Heart left ventricle (tissue), 16 donors: ENCODE measurements at regions of chr5 and their contacts with region 1.

Region 1: DNA sequence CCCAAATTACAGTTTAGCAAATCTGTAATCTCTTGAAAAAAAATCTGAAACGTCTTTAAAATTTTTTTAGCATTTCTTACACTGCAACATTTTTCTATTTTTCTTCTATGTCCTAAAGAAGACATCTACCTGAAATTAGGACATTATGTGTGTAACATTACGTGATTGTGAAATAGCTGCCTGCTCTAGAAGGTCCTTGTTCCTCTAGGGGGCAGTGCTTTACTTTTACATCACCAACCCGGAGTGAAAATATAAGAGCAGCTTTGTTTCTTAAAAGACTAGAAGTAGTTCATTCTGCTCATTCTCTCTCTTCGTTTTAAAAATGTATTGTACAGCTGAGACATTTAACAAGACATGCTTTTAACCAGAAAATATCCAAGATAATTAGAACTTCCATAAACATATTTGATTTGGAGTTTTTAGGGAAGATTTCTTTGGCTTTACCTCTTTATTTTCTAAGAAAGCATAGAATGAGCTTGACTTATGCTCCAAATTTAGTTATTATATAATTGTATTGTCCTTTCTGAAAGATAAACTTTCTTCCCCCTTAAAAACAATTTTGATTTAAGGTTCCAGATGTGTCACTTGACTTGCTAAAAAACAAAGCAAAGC is 48.1 kb upstream of the RIOK2 start:
- DNase-seq: peak in 1 of 5 donors; percentile 40
- ATAC-seq: peak; percentile 73 to 84 (median 77)
- H3K4me3 ChIP-seq: no peak overlapping the region
- H3K27ac ChIP-seq: peak overlapping the region in 2 of 12 donors; percentile 25 to 33
- H3K4me1 ChIP-seq: peaks cover 0 to 20% (median 0%) of the 10 kb centered on the region in 12 donors
- H3K27me3 ChIP-seq: no peaks in the 10 kb centered on the region
- CTCF ChIP-seq: peak; percentile 62 to 86 (median 78)
- POLR2A ChIP-seq: no peak

Region 2: DNA sequence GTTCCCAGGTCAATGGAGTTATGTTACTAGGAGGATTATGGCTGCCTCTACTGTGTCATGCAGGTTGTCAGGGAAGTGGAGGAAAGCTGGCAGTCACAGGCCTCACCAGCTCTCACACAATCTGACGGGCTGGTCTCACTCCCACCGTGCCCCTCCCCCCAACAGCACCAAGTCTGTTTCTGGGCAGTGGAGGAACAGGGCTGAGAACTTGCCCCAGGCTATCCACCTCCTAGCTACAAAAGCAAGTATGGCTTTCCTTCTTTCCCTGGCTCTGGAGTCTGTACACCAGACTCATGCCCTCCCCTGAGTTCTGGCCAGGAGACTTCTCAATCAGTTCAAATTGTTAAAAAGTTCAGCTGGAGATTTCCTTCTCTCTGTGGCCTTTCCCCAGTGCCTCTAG is 22.4 kb before region 1 on chr5:
- intact Hi-C with region 1: no loop called
- DNase-seq: no peak
- ATAC-seq: no peak
- H3K4me3 ChIP-seq: no peak overlapping the region
- H3K27ac ChIP-seq: no peak overlapping the region
- H3K4me1 ChIP-seq: no peaks in the 10 kb centered on the region
- H3K27me3 ChIP-seq: no peaks in the 10 kb centered on the region
- CTCF ChIP-seq: no peak
- POLR2A ChIP-seq: no peak

Region 3: DNA sequence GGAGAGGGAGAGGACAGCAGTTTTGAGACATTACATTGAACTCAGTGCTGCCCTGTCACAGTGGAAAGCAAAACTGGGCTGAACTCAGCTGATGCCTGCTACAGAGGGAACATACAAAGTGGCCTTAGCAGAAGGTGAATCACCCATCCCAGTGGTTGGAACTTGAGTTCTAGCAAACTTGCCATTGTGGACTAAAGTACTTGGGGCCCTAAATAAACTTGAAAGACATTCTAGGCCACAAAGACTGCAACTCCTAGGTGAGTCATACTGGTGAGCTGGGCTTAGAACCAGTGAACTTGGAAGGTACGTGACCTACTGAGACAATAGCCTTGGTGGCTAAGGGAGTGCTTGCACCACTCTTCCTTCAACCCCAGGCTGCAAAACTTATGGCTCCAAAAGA is 107.6 kb after region 1 on chr5:
- intact Hi-C with region 1: no loop called
- DNase-seq: no peak
- ATAC-seq: no peak
- H3K4me3 ChIP-seq: no peak overlapping the region
- H3K27ac ChIP-seq: no peak overlapping the region
- H3K4me1 ChIP-seq: no peaks in the 10 kb centered on the region
- H3K27me3 ChIP-seq: no peaks in the 10 kb centered on the region
- CTCF ChIP-seq: no peak
- POLR2A ChIP-seq: no peak

Region 4: DNA sequence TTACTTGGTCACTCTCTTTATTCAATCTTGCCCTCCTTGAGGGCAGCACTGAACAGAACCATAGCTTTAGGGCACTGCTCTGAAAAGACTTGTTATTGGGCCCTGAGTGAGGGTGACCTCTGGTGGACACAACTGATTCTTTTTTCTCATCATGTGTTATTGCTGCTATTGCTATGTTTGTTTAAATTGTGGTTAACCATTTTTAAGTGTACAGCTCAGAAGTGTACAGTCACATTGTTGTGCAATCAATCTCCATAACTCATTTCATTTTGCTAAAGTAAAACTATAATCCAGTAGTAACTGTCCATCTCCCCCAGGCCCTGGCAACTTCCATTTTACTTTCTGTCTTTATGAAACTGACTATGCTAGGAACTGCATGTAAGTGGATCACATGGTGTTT is 303.0 kb after region 1 on chr5:
- intact Hi-C with region 1: loop called in 6 of 10 experiments (anchors 2 to 10 kb)
- DNase-seq: no peak
- ATAC-seq: peak; percentile 51 to 70 (median 63)
- H3K4me3 ChIP-seq: no peak overlapping the region
- H3K27ac ChIP-seq: no peak overlapping the region
- H3K4me1 ChIP-seq: peaks cover 0 to 7% (median 0%) of the 10 kb centered on the region in 12 donors
- H3K27me3 ChIP-seq: no peaks in the 10 kb centered on the region
- CTCF ChIP-seq: peak in 11 of 12 donors; percentile 25 to 67 (median 58)
- POLR2A ChIP-seq: no peak

Region 5: GRCh38 chr5:98827161-98827560 is 1596.0 kb after region 1 on chr5:
- intact Hi-C with region 1: loop called in 3 of 10 experiments (anchors 5 to 10 kb)
- DNase-seq: no peak
- ATAC-seq: peak in 1 of 4 donors; percentile 59
- H3K4me3 ChIP-seq: no peak overlapping the region
- H3K27ac ChIP-seq: no peak overlapping the region
- H3K4me1 ChIP-seq: no peaks in the 10 kb centered on the region
- H3K27me3 ChIP-seq: no peaks in the 10 kb centered on the region
- CTCF ChIP-seq: peak in 11 of 12 donors; percentile 24 to 68 (median 44)
- POLR2A ChIP-seq: no peak